ENCODE measurements at regions of chr3 and their contacts with region 1.

Region 1: DNA sequence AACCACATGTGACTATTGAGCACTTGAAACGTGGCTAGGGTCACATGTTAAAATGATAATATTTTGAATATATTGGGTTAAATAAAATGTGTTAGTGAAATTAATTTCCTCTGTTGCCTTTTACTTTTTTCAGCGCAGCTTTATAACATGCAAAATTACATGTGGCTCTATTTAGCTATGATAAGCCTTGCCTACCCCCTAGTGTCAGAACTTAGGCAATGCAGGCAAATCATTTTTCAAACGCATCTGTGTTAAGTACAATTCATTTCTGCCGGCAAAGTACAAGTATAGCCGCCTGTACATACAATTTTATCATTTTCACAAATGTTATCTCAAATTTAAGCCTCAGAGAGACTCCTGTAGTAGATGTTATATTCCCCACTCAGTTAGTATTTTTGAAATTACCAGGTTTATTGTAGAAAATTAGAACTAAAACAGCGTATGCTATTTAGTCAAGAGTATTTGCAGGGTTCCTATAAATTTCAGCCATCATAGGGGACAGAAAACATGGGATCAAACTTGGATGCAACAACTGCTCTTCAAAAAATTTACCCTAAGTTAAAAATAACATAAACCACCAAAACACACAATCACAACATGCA is 56.1 kb downstream of the TAFA4 start:
- DNase-seq: peak; percentile 38
- ATAC-seq: peak; percentile 49
- H3K4me3 Mint-ChIP-seq: no peak overlapping the region
- H3K27ac Mint-ChIP-seq: no peak overlapping the region
- H3K4me1 Mint-ChIP-seq: no peaks in the 10 kb centered on the region
- H3K27me3 Mint-ChIP-seq: peaks cover 8% of the 10 kb centered on the region

Region 2: GRCh38 chr3:66938338-66938963 is 1937.8 kb before region 1 on chr3:
- CTCF ChIA-PET with region 1: interaction called, 12 read pairs
- POLR2A ChIA-PET with region 1: no interaction called
- intact Hi-C with region 1: loop called in 1 of 2 experiments (anchors 1 kb)
- DNase-seq: peak; percentile 40
- ATAC-seq: peak; percentile 44
- H3K4me3 Mint-ChIP-seq: no peak overlapping the region
- H3K27ac Mint-ChIP-seq: no peak overlapping the region
- H3K4me1 Mint-ChIP-seq: no peaks in the 10 kb centered on the region
- H3K27me3 Mint-ChIP-seq: peaks cover 18% of the 10 kb centered on the region

Region 3: GRCh38 chr3:67384760-67385397 is 1491.3 kb before region 1 on chr3:
- CTCF ChIA-PET with region 1: no interaction called
- POLR2A ChIA-PET with region 1: no interaction called
- intact Hi-C with region 1: loop called (anchors 2 to 10 kb)
- DNase-seq: peak; percentile 72
- ATAC-seq: peak; percentile 72
- H3K4me3 Mint-ChIP-seq: no peak overlapping the region
- H3K27ac Mint-ChIP-seq: no peak overlapping the region
- H3K4me1 Mint-ChIP-seq: peaks cover 35% of the 10 kb centered on the region
- H3K27me3 Mint-ChIP-seq: no peaks in the 10 kb centered on the region

Region 4: GRCh38 chr3:67819447-67819846 is 1056.8 kb before region 1 on chr3:
- CTCF ChIA-PET with region 1: interaction called, 3 read pairs
- POLR2A ChIA-PET with region 1: no interaction called
- intact Hi-C with region 1: loop called (anchors 5 to 10 kb)
- DNase-seq: peak; percentile 7
- ATAC-seq: no peak
- H3K4me3 Mint-ChIP-seq: no peak overlapping the region
- H3K27ac Mint-ChIP-seq: no peak overlapping the region
- H3K4me1 Mint-ChIP-seq: no peaks in the 10 kb centered on the region
- H3K27me3 Mint-ChIP-seq: no peaks in the 10 kb centered on the region

Region 5: GRCh38 chr3:67901681-67902080 is 974.5 kb before region 1 on chr3:
- CTCF ChIA-PET with region 1: no interaction called
- POLR2A ChIA-PET with region 1: no interaction called
- intact Hi-C with region 1: loop called in 1 of 2 experiments (anchors 10 kb)
- DNase-seq: no peak
- ATAC-seq: no peak
- H3K4me3 Mint-ChIP-seq: no peak overlapping the region
- H3K27ac Mint-ChIP-seq: no peak overlapping the region
- H3K4me1 Mint-ChIP-seq: peaks cover 7% of the 10 kb centered on the region
- H3K27me3 Mint-ChIP-seq: no peaks in the 10 kb centered on the region

Region 6: GRCh38 chr3:68306571-68306970 is 569.6 kb before region 1 on chr3:
- CTCF ChIA-PET with region 1: no interaction called
- POLR2A ChIA-PET with region 1: no interaction called
- intact Hi-C with region 1: no loop called
- DNase-seq: peak; percentile 13
- ATAC-seq: no peak
- H3K4me3 Mint-ChIP-seq: no peak overlapping the region
- H3K27ac Mint-ChIP-seq: no peak overlapping the region
- H3K4me1 Mint-ChIP-seq: no peaks in the 10 kb centered on the region
- H3K27me3 Mint-ChIP-seq: no peaks in the 10 kb centered on the region

Measured in activated CD4-positive, alpha-beta T cell treated with anti-CD3 and anti-CD28 coated beads for 36 hours (primary cell).